Activated naive CD4-positive, alpha-beta T cell treated with anti-CD3 and anti-CD28 coated beads for 36 hours (primary cell): ENCODE measurements at regions of chr13 and their contacts with region 1.

Region 1: GRCh38 chr13:73025217-73026012 is 33.4 kb upstream of the KLF5 start:
- DNase-seq: peak; percentile 10
- H3K4me3 Mint-ChIP-seq: no peak overlapping the region
- H3K27ac Mint-ChIP-seq: no peak overlapping the region
- H3K4me1 Mint-ChIP-seq: peaks cover 12% of the 10 kb centered on the region
- H3K27me3 Mint-ChIP-seq: no peaks in the 10 kb centered on the region

Region 2: GRCh38 chr13:72864142-72865011 is 161.0 kb before region 1 on chr13:
- CTCF ChIA-PET with region 1: no interaction called
- intact Hi-C with region 1: loop called (anchors 1 kb)
- DNase-seq: no peak
- H3K4me3 Mint-ChIP-seq: no peak overlapping the region
- H3K27ac Mint-ChIP-seq: peak overlapping the region; percentile 85
- H3K4me1 Mint-ChIP-seq: peaks cover 13% of the 10 kb centered on the region
- H3K27me3 Mint-ChIP-seq: no peaks in the 10 kb centered on the region

Region 3: DNA sequence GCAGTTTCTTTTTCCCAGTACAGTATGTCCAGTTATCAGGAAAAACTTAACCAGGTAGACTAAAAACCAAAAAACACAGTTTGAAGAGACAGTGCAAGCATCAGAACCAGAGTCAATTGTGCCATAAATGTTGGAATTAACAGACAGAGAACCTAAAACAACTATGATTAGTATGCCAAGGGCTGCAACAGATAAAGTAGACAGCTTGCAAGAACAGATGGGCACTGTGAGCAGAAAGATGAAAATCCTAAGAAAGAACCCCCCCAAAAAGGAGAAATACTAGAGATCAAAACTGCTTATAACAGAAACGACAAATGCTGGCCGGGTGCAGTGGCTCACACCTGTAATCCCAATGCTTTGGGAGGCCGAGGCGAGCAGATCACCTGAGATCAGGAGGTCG is 13.7 kb before region 1 on chr13:
- CTCF ChIA-PET with region 1: no interaction called
- intact Hi-C with region 1: no loop called
- DNase-seq: no peak
- H3K4me3 Mint-ChIP-seq: no peak overlapping the region
- H3K27ac Mint-ChIP-seq: no peak overlapping the region
- H3K4me1 Mint-ChIP-seq: no peaks in the 10 kb centered on the region
- H3K27me3 Mint-ChIP-seq: no peaks in the 10 kb centered on the region